Adrenal gland (tissue), 19 donors: ENCODE measurements at regions of chr22 and their contacts with region 1.

Region 1: GRCh38 chr22:28009272-28009827 is 90.3 kb upstream of the PITPNB start:
- DNase-seq: peak; percentile 58 to 89 (median 72)
- H3K4me3 ChIP-seq: no peak overlapping the region
- H3K27ac ChIP-seq: peak overlapping the region in 1 of 5 donors; percentile 14
- H3K4me1 ChIP-seq: peaks cover 0 to 6% of the 10 kb centered on the region in 2 donors
- H3K27me3 ChIP-seq: no peaks in the 10 kb centered on the region
- CTCF ChIP-seq: peak; percentile 89 to 98 (median 94)
- POLR2A ChIP-seq: no peak

Region 2: DNA sequence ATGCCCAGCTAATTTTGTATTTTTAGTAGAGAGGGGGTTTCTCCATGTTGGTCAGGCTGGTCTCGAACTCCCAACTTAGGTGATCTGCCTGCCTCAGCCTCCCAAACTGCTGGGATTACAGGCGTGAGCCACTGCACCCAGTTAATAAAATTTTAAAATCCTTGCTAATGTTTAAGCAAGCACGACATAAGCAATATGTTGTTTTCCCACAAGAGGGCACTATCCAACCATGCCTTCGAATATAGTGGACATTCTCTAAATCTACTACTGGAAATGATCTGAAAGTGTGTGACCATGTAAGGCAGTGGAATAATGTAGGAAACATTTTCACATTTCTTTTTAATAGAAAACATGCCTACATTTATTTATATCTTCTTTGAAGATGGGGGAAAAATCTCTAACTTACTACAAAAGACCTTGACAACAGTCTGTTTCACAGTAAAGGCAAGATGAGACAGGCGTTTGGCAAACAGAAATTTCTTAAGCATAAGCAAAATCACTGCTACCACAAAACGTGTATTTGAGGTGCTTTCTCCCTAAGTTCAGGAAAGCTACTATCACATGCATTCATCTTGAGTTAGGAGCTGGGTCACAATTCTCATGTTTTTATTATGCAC is 128.5 kb before region 1 on chr22:
- intact Hi-C with region 1: loop called (anchors 2 to 5 kb)
- DNase-seq: peak in 6 of 7 donors; percentile 34 to 72 (median 60)
- H3K4me3 ChIP-seq: no peak overlapping the region
- H3K27ac ChIP-seq: peak overlapping the region in 2 of 5 donors; percentile 15 to 63
- H3K4me1 ChIP-seq: peaks cover 3 to 42% of the 10 kb centered on the region in 2 donors
- H3K27me3 ChIP-seq: no peaks in the 10 kb centered on the region
- CTCF ChIP-seq: peak; percentile 71 to 86 (median 79)
- POLR2A ChIP-seq: no peak

Region 3: GRCh38 chr22:28112548-28113043 is 103.2 kb after region 1 on chr22:
- intact Hi-C with region 1: no loop called
- DNase-seq: peak in 6 of 7 donors; percentile 36 to 70 (median 46)
- H3K4me3 ChIP-seq: no peak overlapping the region
- H3K27ac ChIP-seq: no peak overlapping the region
- H3K4me1 ChIP-seq: peaks cover 0 to 12% of the 10 kb centered on the region in 2 donors
- H3K27me3 ChIP-seq: no peaks in the 10 kb centered on the region
- CTCF ChIP-seq: peak in 5 of 6 experiments; percentile 41 to 58 (median 45)
- POLR2A ChIP-seq: no peak

Region 4: GRCh38 chr22:28329186-28330073 is 320.1 kb after region 1 on chr22:
- intact Hi-C with region 1: no loop called
- DNase-seq: no peak
- H3K4me3 ChIP-seq: no peak overlapping the region
- H3K27ac ChIP-seq: no peak overlapping the region
- H3K4me1 ChIP-seq: peaks cover 0 to 11% of the 10 kb centered on the region in 2 donors
- H3K27me3 ChIP-seq: no peaks in the 10 kb centered on the region
- CTCF ChIP-seq: no peak
- POLR2A ChIP-seq: no peak